CD4-positive, alpha-beta T cell (primary cell): ENCODE measurements at regions of chr10 and their contacts with region 1.

Region 1: DNA sequence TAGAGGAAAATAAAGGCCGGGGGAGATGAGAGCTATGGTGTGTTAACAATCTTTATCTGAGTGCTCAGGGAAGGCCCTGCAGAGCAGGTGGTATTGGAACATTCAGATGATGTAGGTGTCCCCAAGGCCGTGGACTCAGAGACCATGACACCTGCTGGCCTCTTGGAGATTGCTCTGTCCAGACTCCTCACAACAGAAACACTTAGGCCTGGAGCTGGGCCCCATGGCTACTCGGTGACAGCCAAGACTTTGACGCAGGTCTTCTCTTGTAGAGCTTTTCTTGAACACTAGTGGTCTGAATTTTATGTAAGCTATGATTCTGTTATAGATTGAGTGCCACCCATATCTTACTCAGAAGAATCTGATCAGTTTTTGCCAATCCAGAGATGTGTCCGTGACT is 13.4 kb downstream of the AKR1E2 start:
- DNase-seq: no peak
- ATAC-seq: no peak
- H3K4me3 ChIP-seq: no peak overlapping the region
- H3K4me3 Mint-ChIP-seq: no peak overlapping the region
- H3K27ac ChIP-seq: no peak overlapping the region
- H3K27ac Mint-ChIP-seq: peak overlapping the region; percentile 77
- H3K4me1 ChIP-seq: peaks cover 34% of the 10 kb centered on the region
- H3K4me1 Mint-ChIP-seq: peaks cover 42% of the 10 kb centered on the region
- H3K27me3 ChIP-seq: no peaks in the 10 kb centered on the region
- H3K27me3 Mint-ChIP-seq: no peaks in the 10 kb centered on the region
- CTCF ChIP-seq: no peak

Region 2: DNA sequence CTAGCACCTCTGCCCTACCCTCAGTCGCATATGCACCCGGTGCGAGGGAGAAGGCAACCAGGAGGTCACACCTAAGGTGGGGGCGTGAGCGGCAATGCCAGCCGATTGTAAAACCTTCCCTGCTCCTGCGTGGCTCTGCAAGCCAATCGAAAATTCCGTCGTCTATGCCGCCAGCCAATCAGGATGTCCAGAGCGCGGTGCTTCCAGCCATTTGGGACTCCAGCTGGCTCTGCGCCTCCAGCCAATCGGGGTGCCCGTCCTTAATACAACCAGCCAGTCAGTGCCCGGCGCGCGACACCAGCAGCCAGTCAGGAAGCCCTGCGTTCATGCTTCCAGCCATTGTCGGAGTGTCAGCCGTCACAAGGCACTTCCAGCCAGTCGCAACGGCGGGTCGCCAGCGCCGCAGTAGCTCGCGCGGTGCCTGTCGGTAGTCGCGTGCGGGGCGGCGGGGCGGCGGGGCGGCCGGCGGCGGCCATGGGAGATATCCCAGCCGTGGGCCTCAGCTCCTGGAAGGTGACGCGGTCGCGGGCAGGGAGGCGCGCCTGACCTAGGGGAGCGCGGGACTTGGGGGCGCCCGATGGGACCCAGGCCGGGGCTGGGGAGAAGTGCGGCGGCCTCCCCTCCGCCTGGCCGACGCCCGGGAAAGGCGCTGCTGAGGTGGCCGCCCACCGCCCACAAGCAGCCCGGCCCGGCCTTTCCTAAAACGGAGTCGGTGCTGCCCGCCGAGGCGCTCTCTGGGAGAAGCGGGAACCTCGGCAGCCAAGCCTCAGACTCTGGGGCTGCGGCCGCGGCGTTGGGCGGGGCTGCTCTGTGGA is 13.3 kb before region 1 on chr10 and contains the start of gene AKR1E2:
- CTCF ChIA-PET with region 1: no interaction called
- POLR2A ChIA-PET with region 1: interaction called, 20 read pairs
- intact Hi-C with region 1: no loop called
- DNase-seq: peak; percentile 45 to 94 (median 78)
- ATAC-seq: peak; percentile 92
- H3K4me3 ChIP-seq: peak within 1 kb of the TSS; percentile 52
- H3K4me3 Mint-ChIP-seq: peak within 1 kb of the TSS; percentile 66
- H3K27ac ChIP-seq: peak within 1 kb of the TSS in 1 of 2 donors; percentile 52
- H3K27ac Mint-ChIP-seq: peak within 1 kb of the TSS; percentile 63
- H3K4me1 ChIP-seq: peaks cover 18% of the 10 kb centered on the region
- H3K4me1 Mint-ChIP-seq: peaks cover 43% of the 10 kb centered on the region
- H3K27me3 ChIP-seq: peaks cover 0 to 4% of the 10 kb centered on the region in 2 experiments
- H3K27me3 Mint-ChIP-seq: peaks cover 7% of the 10 kb centered on the region
- CTCF ChIP-seq: no peak
- total RNA-seq, gene AKR1E2: 26.0 to 30.4 TPM

Region 3: GRCh38 chr10:5376450-5376849 is 537.0 kb after region 1 on chr10:
- CTCF ChIA-PET with region 1: no interaction called
- POLR2A ChIA-PET with region 1: no interaction called
- intact Hi-C with region 1: no loop called
- DNase-seq: no peak
- ATAC-seq: no peak
- H3K4me3 ChIP-seq: no peak overlapping the region
- H3K4me3 Mint-ChIP-seq: no peak overlapping the region
- H3K27ac ChIP-seq: no peak overlapping the region
- H3K27ac Mint-ChIP-seq: no peak overlapping the region
- H3K4me1 ChIP-seq: no peaks in the 10 kb centered on the region
- H3K4me1 Mint-ChIP-seq: no peaks in the 10 kb centered on the region
- H3K27me3 ChIP-seq: no peaks in the 10 kb centered on the region
- H3K27me3 Mint-ChIP-seq: no peaks in the 10 kb centered on the region
- CTCF ChIP-seq: no peak